Activated naive CD4-positive, alpha-beta T cell treated with anti-CD3 and anti-CD28 coated beads for 36 hours (primary cell): ENCODE measurements at regions of chr16 and their contacts with region 1.

Region 1: DNA sequence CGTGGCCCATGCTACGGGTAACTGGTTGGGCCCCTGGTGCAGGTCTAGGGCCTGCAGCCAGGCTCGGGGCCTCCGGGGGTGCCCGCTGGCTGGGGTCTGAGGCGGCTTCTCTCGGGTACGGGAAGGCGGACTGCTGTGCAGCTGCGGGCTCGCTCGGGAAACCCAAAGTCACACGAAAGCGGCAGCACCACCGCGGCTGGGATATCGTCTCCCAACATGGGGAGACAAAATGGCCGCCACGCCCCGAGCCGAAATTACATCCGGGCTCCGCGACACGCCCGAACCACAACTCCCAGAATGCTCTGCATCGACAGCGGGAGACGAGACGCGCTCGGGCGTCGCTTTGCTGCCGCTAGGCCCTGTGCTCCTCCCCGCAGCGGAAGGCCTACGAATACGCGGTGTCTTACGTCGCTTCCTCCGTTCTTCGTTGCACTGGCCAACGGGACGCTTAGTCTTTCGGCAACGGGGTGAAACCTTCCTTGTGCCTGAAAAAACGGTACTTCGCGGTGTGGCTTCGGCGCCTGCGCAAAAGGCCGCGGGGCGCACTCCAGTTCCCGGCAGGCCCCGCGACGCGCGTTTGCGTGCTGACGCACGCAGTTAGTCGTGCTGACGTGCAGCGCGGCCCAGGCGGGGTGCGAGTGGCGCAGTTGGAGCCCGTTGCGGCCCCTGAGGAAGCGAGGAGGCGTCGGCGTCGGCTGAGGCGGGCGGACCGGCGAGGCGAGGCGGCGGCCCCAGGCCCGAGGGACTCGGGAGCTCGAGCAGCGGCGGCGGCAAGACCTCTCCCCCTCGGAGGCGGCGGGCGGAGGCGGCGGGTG is at the start of gene SRRM2:
- DNase-seq: peak; percentile 97
- H3K4me3 Mint-ChIP-seq: peak within 1 kb of the TSS; percentile 87
- H3K27ac Mint-ChIP-seq: peak within 1 kb of the TSS; percentile 99
- H3K4me1 Mint-ChIP-seq: peaks cover 42% of the 10 kb centered on the region
- H3K27me3 Mint-ChIP-seq: no peaks in the 10 kb centered on the region
- total RNA-seq, gene SRRM2: 607 to 649 TPM

Region 2: DNA sequence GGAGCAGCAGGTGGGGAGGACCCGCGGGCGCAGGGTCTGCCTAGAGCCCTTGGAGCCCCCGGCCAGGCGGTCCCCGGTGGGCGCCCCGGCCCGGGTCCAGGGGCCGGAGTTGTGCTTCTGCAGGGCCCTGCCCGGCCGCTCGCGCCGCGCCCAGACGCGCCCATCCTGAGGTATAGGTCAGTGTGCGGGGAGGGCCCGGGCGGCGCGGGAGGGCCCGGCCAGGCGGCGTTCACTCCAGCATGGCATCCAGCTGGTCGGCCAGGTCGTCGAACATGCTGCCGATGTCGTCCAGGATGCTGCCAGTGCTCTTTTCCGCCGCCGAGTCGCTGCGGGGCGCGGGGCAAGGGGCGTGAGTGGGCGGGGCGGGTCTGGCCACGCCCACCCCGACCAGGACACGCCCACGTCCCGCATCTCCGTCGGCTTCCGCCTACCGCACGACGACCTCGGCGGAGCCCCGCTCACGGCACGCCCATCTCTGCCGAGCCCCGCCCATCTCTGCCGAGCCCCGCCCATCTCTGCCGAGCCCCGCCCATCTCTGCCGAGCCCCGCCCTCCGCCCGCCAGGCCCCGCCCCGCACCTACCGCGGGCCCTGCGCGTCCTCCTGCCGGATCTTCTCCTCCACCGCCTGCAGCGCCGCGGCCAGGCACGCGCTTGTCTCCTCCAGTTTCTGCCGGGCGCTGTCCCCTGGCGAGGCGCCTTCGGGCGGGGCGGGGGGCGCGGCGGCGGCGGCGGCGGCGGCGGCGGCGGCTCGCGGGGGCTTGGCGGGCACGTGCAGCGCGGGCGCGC is 573.7 kb before region 1 on chr16:
- CTCF ChIA-PET with region 1: no interaction called
- intact Hi-C with region 1: no loop called
- DNase-seq: peak; percentile 12
- H3K4me3 Mint-ChIP-seq: no peak overlapping the region
- H3K27ac Mint-ChIP-seq: no peak overlapping the region
- H3K4me1 Mint-ChIP-seq: no peaks in the 10 kb centered on the region
- H3K27me3 Mint-ChIP-seq: no peaks in the 10 kb centered on the region

Region 3: GRCh38 chr16:2673066-2673999 is 78.9 kb before region 1 on chr16:
- CTCF ChIA-PET with region 1: no interaction called
- intact Hi-C with region 1: loop called (anchors 5 kb)
- DNase-seq: peak; percentile 95
- H3K4me3 Mint-ChIP-seq: peak overlapping the region; percentile 78
- H3K27ac Mint-ChIP-seq: peak overlapping the region; percentile 56
- H3K4me1 Mint-ChIP-seq: peaks cover 36% of the 10 kb centered on the region
- H3K27me3 Mint-ChIP-seq: no peaks in the 10 kb centered on the region

Region 4: DNA sequence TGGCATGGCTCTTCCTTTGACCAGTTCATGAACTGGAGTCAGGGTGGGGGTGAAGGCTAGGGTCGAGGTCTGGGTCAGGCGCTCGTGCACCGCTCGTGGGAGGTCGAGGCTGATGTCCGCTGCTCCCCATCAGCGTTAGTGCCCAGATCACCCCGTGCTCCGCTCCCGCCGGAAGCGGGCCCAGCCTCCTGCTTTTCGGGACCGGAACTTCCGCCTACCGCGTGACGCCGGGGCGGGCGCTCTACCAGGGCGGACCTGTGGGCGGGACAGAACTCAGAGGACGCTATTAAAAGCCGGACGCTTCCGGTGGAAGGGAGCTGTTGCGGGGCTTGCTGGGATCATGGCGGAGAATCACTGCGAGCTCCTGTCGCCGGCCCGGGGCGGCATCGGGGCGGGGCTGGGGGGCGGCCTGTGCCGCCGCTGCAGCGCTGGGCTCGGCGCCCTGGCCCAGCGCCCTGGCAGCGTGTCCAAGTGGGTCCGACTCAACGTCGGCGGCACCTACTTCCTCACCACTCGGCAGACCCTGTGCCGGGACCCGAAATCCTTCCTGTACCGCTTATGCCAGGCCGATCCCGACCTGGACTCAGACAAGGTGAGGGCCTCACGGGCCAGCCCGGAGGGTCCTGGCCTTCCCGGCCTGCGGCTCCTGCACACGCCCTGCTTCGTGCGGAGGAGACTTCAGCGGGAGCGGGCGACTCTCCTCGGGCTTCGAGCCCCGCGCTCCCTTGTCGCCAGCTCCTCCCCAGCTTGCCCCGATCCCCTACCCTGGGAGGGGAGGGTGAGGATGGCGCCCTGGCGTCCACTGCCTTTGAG is 69.8 kb before region 1 on chr16 and contains the start of gene KCTD5:
- CTCF ChIA-PET with region 1: no interaction called
- intact Hi-C with region 1: loop called (anchors 1 kb)
- DNase-seq: peak; percentile 98
- H3K4me3 Mint-ChIP-seq: peak within 1 kb of the TSS; percentile 97
- H3K27ac Mint-ChIP-seq: peak within 1 kb of the TSS; percentile 93
- H3K4me1 Mint-ChIP-seq: peaks cover 22% of the 10 kb centered on the region
- H3K27me3 Mint-ChIP-seq: no peaks in the 10 kb centered on the region
- total RNA-seq, gene KCTD5: 21.8 to 24.1 TPM

Region 5: GRCh38 chr16:2720719-2721633 is 31.3 kb before region 1 on chr16:
- CTCF ChIA-PET with region 1: no interaction called
- intact Hi-C with region 1: loop called (anchors 1 kb)
- DNase-seq: peak; percentile 92
- H3K4me3 Mint-ChIP-seq: peak overlapping the region; percentile 82
- H3K27ac Mint-ChIP-seq: peak overlapping the region; percentile 85
- H3K4me1 Mint-ChIP-seq: no peaks in the 10 kb centered on the region
- H3K27me3 Mint-ChIP-seq: peaks cover 2% of the 10 kb centered on the region

Region 6: DNA sequence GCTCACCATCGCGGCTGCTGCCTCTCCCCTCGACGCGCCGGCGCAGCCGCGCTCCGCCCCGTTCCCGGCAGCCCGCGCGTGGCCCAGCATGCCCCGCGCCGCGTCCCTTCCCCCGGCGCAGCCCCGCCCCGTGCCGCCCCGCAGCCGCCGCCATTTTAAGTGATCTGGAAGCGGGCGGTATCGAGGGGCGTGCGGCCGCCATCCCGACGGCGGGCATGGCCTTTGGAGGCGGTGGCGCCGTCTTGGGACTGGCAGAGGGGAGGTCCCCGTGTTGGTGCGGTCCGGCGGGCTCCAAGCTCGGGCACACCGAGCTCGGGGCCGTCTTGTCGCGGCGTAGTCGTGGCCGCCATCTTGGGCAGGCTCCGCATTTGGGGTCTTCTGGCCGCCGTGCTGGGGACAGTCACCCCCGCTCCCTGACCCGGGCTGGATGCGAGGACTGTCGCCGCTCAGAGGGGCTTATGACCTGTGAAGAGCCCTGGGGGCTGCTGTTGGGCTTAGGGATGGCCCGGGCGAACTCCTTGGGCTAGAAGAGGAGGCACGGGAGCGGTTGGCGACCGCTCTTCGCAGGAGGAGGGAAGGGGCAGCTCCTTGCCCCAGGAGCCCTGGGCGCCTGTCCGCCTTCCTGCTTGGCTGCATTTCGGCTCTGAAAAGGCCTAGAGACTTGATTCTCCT is 25.1 kb after region 1 on chr16 and contains the start of gene ELOB:
- CTCF ChIA-PET with region 1: interaction called, 5 read pairs
- intact Hi-C with region 1: loop called (anchors 1 kb)
- DNase-seq: peak; percentile 91
- H3K4me3 Mint-ChIP-seq: peak within 1 kb of the TSS; percentile 94
- H3K27ac Mint-ChIP-seq: peak within 1 kb of the TSS; percentile 96
- H3K4me1 Mint-ChIP-seq: peaks cover 31% of the 10 kb centered on the region
- H3K27me3 Mint-ChIP-seq: no peaks in the 10 kb centered on the region
- total RNA-seq, gene ELOB: 177 to 189 TPM